Activated naive CD4-positive, alpha-beta T cell treated with anti-CD3 and anti-CD28 coated beads for 36 hours (primary cell): ENCODE measurements at regions of chr2 and their contacts with region 1.

Region 1: DNA sequence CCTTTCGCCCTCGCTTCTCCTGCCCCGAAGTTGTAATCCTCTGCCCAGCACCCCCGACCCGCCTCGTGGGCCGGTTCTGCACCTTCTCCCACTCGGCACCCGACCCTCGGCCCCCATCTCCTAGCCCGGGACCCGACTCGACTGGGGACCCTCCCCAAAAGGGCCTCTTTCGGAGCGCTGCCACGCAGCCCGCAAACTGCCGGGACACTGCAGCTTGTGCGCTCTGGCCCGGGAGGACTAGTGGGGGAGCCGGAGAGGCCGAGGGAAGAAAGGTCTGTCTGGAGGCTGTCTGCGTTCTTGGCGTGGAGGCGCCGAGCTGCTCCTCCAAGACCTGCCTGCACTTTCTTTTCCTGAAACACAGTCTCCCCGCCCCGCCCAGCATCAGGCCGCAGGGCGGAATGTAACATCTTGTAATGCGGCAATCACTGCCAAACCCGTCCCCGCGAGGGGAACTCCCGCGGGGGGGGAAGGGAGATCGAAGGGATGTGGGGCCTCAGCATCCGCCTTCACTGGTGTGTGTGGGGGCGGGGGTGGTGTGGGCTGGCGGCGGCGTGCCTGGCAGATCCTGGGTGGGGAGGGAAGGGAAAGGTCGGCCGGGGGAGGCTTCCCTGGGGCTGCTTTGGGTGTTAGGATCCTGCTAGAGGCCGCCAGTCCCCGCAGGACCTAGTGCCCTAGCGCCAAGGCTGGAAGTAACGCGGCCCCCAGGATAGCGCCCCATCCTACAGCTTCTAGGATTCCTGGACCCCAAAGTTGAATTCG is 7.4 kb downstream of the DLX2 start:
- DNase-seq: peak; percentile 87
- H3K4me3 Mint-ChIP-seq: peak overlapping the region; percentile 78
- H3K27ac Mint-ChIP-seq: peak overlapping the region; percentile 47
- H3K4me1 Mint-ChIP-seq: peaks cover 42% of the 10 kb centered on the region
- H3K27me3 Mint-ChIP-seq: peaks cover 75% of the 10 kb centered on the region

Region 2: GRCh38 chr2:170715062-170715931 is 1380.0 kb before region 1 on chr2 and contains the start of gene SP5:
- CTCF ChIA-PET with region 1: no interaction called
- intact Hi-C with region 1: loop called (anchors 5 kb)
- DNase-seq: no peak
- H3K4me3 Mint-ChIP-seq: peak within 1 kb of the TSS; percentile 76
- H3K27ac Mint-ChIP-seq: no peak within 1 kb of the TSS
- H3K4me1 Mint-ChIP-seq: peaks cover 33% of the 10 kb centered on the region
- H3K27me3 Mint-ChIP-seq: peaks cover 67% of the 10 kb centered on the region
- total RNA-seq, gene SP5: not detected

Region 3: DNA sequence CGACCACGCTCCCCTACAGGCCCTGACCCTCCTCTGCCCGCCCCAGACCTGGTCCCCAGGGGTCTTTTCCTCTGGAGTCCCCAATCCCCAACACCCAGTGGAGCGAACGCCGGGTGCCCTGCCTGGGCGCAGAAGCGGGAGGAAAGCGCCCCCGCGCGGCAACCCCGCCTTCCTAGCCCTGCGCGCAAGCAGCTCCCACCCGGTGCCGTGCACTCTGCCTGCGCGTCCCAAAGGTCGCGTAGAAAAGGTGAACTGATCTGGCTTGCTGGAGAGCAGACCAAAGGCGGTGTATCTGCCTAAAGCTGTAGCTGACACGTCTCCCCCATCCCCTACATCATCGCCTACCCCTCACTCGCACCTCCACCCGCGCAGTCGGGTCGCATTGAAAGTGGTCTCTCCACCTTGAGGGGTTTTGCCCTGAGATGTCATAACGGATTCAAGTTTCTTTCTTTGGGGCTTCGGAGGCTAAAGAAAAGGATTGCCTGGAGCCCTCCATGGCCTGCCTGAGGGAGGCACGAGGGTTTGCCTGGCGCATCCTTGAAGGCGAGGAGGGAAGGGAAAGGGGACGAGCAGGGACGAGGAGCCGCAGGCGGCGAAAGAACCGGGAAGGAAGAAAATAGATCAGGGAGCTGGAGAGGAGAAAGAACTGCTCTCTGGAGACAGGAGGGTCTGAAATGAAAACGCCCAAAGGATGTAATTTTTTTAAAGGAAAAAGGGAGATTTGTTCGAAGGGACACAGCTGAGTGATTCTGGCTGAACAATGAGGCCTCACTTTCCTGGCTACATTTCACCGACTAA is 1272.8 kb before region 1 on chr2:
- CTCF ChIA-PET with region 1: no interaction called
- intact Hi-C with region 1: loop called (anchors 5 kb)
- DNase-seq: peak; percentile 62
- H3K4me3 Mint-ChIP-seq: peak overlapping the region; percentile 27
- H3K27ac Mint-ChIP-seq: no peak overlapping the region
- H3K4me1 Mint-ChIP-seq: peaks cover 41% of the 10 kb centered on the region
- H3K27me3 Mint-ChIP-seq: peaks cover 79% of the 10 kb centered on the region

Region 4: GRCh38 chr2:171999604-172000469 is 95.5 kb before region 1 on chr2 and contains the start of gene METAP1D:
- CTCF ChIA-PET with region 1: no interaction called
- intact Hi-C with region 1: loop called (anchors 2 kb)
- DNase-seq: peak; percentile 88
- H3K4me3 Mint-ChIP-seq: peak within 1 kb of the TSS; percentile 94
- H3K27ac Mint-ChIP-seq: peak within 1 kb of the TSS; percentile 89
- H3K4me1 Mint-ChIP-seq: peaks cover 25% of the 10 kb centered on the region
- H3K27me3 Mint-ChIP-seq: no peaks in the 10 kb centered on the region
- total RNA-seq, gene METAP1D: 2.5 to 3.4 TPM

Region 5: DNA sequence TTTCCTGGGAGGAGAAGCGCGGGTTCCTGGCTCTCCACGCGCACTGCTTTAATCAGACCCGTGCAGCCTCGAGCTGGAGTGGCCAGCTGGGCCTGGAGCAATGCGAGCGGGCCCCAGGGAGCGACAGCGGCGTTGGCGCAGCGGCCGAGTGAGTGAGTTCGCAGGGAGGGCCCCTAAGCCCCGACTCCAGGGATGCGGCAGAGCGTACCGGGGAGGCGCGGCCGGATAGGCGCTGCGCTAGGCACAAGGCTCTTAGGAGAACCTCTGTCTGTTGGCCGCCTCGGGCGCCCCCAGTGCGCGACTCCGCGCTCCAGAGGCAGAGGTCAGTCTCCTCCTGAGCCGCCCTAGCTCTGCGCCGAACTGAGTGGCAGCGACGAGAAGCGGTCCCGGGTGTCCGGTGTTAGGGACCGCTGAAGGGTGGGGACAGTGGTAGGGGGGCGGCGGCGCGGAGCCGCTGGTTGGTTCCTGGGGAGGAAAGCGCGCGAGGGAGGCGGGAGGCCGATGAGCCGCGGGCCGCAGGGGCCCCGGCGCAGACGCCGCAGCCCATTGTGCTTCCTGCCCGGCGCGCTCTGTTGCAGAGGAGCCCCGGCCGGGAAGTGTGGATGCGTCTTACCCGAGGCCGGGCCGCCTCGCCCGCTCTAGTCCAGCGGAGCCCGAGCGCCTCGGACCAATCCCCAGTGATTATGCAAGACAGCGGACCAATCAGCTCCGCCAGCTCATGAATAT is 10.4 kb before region 1 on chr2:
- CTCF ChIA-PET with region 1: interaction called, 5 read pairs
- intact Hi-C with region 1: loop called (anchors 1 kb)
- DNase-seq: peak; percentile 77
- H3K4me3 Mint-ChIP-seq: peak overlapping the region; percentile 71
- H3K27ac Mint-ChIP-seq: no peak overlapping the region
- H3K4me1 Mint-ChIP-seq: peaks cover 63% of the 10 kb centered on the region
- H3K27me3 Mint-ChIP-seq: peaks cover 95% of the 10 kb centered on the region